ENCODE measurements at regions of chr3 and their contacts with region 1.

Region 1: DNA sequence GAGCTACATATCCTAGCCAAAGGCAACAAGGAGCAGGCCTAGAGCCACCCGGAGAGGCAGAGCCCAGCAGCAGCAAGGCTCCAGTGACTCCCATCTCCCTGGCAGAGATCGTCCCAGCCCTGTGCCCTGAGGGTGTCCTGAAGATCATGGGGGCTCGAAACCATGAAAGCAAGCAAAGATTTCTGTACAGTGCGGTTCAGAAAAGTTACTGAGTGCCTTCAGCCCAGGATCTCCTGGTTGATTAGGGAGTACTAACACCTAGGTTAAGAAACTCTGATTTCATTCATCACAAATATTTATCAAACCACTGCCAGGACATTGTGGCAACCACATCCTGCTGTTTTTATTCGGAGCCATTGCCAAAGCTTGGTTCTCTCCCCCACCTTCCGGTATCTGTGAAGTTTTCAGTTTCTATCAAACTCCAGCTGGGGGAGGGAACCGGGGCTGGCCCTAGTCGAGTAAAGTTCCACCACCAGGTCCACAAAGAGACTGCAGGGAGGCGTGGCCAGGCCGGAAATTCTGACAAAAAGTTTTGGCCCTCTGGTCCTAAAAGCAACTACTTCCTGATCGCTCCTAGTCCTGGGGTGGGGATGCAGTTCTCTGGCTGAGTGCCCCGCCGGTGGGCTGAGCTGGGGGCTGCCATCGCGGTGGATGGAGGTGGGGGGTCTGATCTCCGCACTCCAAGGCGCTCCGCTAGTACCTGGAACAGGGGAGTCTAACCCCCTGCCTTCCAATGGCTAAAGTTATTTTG is 1.2 kb downstream of the RAB43 start:
- DNase-seq: peak; percentile 72
- ATAC-seq: peak; percentile 65
- H3K4me3 Mint-ChIP-seq: peak overlapping the region; percentile 87
- H3K27ac Mint-ChIP-seq: peak overlapping the region; percentile 86
- H3K4me1 Mint-ChIP-seq: peaks cover 54% of the 10 kb centered on the region
- H3K27me3 Mint-ChIP-seq: no peaks in the 10 kb centered on the region
- CTCF ChIP-seq: no peak

Region 2: GRCh38 chr3:128879125-128879969 is 241.1 kb before region 1 on chr3 and contains the start of gene ACAD9:
- CTCF ChIA-PET with region 1: no interaction called
- POLR2A ChIA-PET with region 1: interaction called, 14 read pairs
- intact Hi-C with region 1: no loop called
- DNase-seq: peak; percentile 99
- ATAC-seq: peak; percentile 94
- H3K4me3 Mint-ChIP-seq: peak within 1 kb of the TSS; percentile 88
- H3K27ac Mint-ChIP-seq: peak within 1 kb of the TSS; percentile 92
- H3K4me1 Mint-ChIP-seq: peaks cover 52% of the 10 kb centered on the region
- H3K27me3 Mint-ChIP-seq: no peaks in the 10 kb centered on the region
- CTCF ChIP-seq: no peak
- total RNA-seq, gene ACAD9: 52.5 and 57.3 TPM in 2 replicates

Region 3: GRCh38 chr3:129026728-129027543 is 93.5 kb before region 1 on chr3:
- CTCF ChIA-PET with region 1: interaction called, 3 read pairs
- POLR2A ChIA-PET with region 1: interaction called, 17 read pairs
- intact Hi-C with region 1: loop called (anchors 2 kb)
- DNase-seq: peak; percentile 83
- ATAC-seq: peak; percentile 97
- H3K4me3 Mint-ChIP-seq: peak overlapping the region; percentile 85
- H3K27ac Mint-ChIP-seq: peak overlapping the region; percentile 94
- H3K4me1 Mint-ChIP-seq: peaks cover 12% of the 10 kb centered on the region
- H3K27me3 Mint-ChIP-seq: no peaks in the 10 kb centered on the region
- CTCF ChIP-seq: no peak

Region 4: DNA sequence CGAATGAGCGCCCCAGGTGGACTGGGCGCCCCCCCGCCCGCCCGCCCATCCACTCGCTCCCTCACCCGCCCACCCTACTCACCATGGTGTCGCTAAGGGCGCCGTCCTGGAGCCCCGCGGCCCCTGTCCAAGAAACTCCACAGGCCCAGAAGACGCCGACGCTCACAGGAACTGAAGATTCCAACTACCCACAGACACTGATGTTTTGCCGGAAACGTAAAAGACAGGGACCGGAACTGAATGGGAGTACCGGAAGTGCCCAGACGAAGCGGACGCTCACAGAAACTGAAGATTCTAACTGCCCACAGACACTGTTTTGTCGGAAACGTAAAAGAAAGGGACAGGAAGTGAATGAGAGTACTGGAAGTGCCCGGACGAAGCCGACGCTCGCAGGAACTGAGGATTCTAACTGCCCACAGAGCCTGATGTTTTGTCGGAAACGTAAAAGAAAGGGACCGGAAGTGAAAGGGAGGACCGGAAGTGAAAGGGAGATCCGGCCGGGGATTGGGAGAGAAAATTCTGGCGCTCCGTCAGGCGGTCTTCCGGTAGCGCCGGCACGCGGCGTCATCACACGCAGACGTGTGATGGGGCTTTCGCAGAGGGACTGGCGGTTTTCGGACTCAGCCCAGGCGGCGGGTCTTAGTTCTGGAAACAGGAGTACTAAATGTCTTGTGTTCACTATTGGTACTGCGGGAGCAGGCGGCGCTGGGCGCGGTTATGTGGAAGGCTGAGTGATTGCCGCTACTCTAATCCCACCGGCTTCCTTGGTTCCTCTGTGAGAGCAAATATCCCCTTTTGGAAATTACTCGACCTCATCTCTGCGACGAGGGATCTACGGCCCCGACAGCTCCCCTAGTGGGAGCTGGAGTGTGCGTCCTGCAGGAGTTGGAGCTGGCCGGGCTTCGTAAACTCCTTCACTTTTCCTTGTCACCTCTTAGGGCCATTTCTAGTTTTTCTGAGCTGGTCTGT is 40.7 kb after region 1 on chr3 and contains the start of gene ISY1:
- CTCF ChIA-PET with region 1: interaction called, 5 read pairs
- POLR2A ChIA-PET with region 1: interaction called, 15 read pairs
- intact Hi-C with region 1: loop called (anchors 1 kb)
- DNase-seq: peak; percentile 80
- ATAC-seq: peak; percentile 84
- H3K4me3 Mint-ChIP-seq: peak within 1 kb of the TSS; percentile 98
- H3K27ac Mint-ChIP-seq: peak within 1 kb of the TSS; percentile 100
- H3K4me1 Mint-ChIP-seq: peaks cover 39% of the 10 kb centered on the region
- H3K27me3 Mint-ChIP-seq: no peaks in the 10 kb centered on the region
- CTCF ChIP-seq: no peak
- total RNA-seq, gene ISY1: 47.7 and 52.9 TPM in 2 replicates

Region 5: DNA sequence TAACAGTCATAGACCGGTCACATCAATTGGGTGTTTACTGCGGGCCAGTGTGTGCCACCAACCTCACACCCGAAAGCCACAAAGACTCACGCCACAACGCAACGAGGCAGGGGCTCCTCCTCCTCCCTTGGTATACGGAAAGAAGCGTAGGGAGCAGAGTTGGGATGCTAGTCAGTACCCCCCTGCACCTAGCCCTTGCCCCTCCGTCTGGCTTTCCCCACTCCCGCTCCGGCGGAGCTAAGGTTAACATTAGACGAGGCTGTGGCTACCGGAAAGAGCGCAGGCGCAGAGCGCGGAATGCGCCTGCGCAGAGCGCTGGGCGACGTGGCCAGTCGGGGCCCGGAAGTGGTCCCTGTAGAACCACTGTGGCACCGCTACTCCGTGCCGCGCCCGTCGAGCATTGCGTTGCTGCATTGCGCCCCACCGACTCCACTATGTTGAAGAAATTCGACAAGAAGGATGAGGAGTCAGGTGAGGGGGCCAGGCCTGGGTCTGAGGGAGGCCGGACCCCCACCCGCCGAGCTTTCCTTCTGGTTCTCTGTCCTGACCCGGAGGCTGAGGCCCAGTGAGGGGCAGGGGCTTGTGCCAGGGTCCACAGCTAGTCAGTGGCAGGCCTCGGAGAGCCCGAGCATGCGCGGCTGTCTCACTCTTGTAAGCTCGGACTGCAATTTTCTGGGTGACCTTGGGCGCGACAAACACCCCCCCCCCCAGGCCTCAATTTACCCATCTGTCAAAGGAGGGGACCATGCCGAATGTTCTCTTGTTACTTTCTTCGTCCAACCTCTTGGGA is 129.0 kb after region 1 on chr3 and contains the start of gene COPG1:
- CTCF ChIA-PET with region 1: interaction called, 13 read pairs
- POLR2A ChIA-PET with region 1: interaction called, 26 read pairs
- intact Hi-C with region 1: loop called (anchors 2 kb)
- DNase-seq: peak; percentile 87
- ATAC-seq: peak; percentile 87
- H3K4me3 Mint-ChIP-seq: peak within 1 kb of the TSS; percentile 92
- H3K27ac Mint-ChIP-seq: peak within 1 kb of the TSS; percentile 89
- H3K4me1 Mint-ChIP-seq: peaks cover 26% of the 10 kb centered on the region
- H3K27me3 Mint-ChIP-seq: no peaks in the 10 kb centered on the region
- CTCF ChIP-seq: no peak
- total RNA-seq, gene COPG1: 92.2 and 101 TPM in 2 replicates

Region 6: GRCh38 chr3:129439817-129440617 is 319.6 kb after region 1 on chr3 and contains the starts of genes IFT122 and MBD4:
- CTCF ChIA-PET with region 1: no interaction called
- POLR2A ChIA-PET with region 1: interaction called, 5 read pairs
- intact Hi-C with region 1: loop called (anchors 2 kb)
- DNase-seq: peak; percentile 92
- ATAC-seq: peak; percentile 83
- H3K4me3 Mint-ChIP-seq: peak within 1 kb of the TSS; percentile 96
- H3K27ac Mint-ChIP-seq: peak within 1 kb of the TSS; percentile 96
- H3K4me1 Mint-ChIP-seq: peaks cover 60% of the 10 kb centered on the region
- H3K27me3 Mint-ChIP-seq: no peaks in the 10 kb centered on the region
- CTCF ChIP-seq: no peak
- total RNA-seq, gene IFT122: 18.7 and 19.2 TPM in 2 replicates
- total RNA-seq, gene MBD4: 86.3 and 98.7 TPM in 2 replicates

Region 7: GRCh38 chr3:129845956-129846355 is 725.5 kb after region 1 on chr3:
- CTCF ChIA-PET with region 1: no interaction called
- POLR2A ChIA-PET with region 1: no interaction called
- intact Hi-C with region 1: no loop called
- DNase-seq: no peak
- ATAC-seq: no peak
- H3K4me3 Mint-ChIP-seq: no peak overlapping the region
- H3K27ac Mint-ChIP-seq: no peak overlapping the region
- H3K4me1 Mint-ChIP-seq: peaks cover 4% of the 10 kb centered on the region
- H3K27me3 Mint-ChIP-seq: no peaks in the 10 kb centered on the region
- CTCF ChIP-seq: no peak

Measured in activated B cell treated with CpG ODN at 0.5 μM for 24 hours (primary cell).